ENCODE measurements at regions of chr1 and their contacts with region 1.

Region 1: DNA sequence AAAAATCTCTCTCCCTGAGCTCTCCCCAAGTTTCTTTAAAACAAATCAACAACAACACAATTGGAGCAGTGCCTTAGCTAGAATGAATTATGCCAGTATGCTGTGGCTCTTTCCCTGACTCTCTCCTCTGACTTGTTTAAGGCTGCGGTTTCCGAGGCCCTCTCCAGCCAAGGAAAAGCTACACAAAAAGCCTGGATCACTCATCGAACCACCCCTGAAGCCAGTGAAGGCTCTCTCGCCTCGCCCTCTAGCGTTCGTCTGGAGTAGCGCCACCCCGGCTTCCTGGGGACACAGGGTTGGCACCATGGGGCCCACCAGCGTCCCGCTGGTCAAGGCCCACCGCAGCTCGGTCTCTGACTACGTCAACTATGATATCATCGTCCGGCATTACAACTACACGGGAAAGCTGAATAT is 1.9 kb downstream of the S1PR1 start:
- DNase-seq: peak; percentile 93
- H3K4me3 Mint-ChIP-seq: peak overlapping the region; percentile 52
- H3K27ac Mint-ChIP-seq: no peak overlapping the region
- H3K4me1 Mint-ChIP-seq: peaks cover 32% of the 10 kb centered on the region
- H3K27me3 Mint-ChIP-seq: no peaks in the 10 kb centered on the region
- CTCF ChIP-seq: peak; percentile 89

Region 2: GRCh38 chr1:100921109-100921706 is 317.5 kb before region 1 on chr1:
- CTCF ChIA-PET with region 1: interaction called, 57 read pairs
- POLR2A ChIA-PET with region 1: interaction called, 6 read pairs
- intact Hi-C with region 1: loop called (anchors 1 kb)
- DNase-seq: peak; percentile 66
- H3K4me3 Mint-ChIP-seq: no peak overlapping the region
- H3K27ac Mint-ChIP-seq: no peak overlapping the region
- H3K4me1 Mint-ChIP-seq: no peaks in the 10 kb centered on the region
- H3K27me3 Mint-ChIP-seq: no peaks in the 10 kb centered on the region
- CTCF ChIP-seq: peak; percentile 53

Region 3: GRCh38 chr1:100989306-100990077 is 249.2 kb before region 1 on chr1:
- CTCF ChIA-PET with region 1: interaction called, 5 read pairs
- POLR2A ChIA-PET with region 1: no interaction called
- intact Hi-C with region 1: loop called (anchors 5 kb)
- DNase-seq: peak; percentile 45
- H3K4me3 Mint-ChIP-seq: no peak overlapping the region
- H3K27ac Mint-ChIP-seq: peak overlapping the region; percentile 51
- H3K4me1 Mint-ChIP-seq: peaks cover 10% of the 10 kb centered on the region
- H3K27me3 Mint-ChIP-seq: no peaks in the 10 kb centered on the region
- CTCF ChIP-seq: no peak

Region 4: DNA sequence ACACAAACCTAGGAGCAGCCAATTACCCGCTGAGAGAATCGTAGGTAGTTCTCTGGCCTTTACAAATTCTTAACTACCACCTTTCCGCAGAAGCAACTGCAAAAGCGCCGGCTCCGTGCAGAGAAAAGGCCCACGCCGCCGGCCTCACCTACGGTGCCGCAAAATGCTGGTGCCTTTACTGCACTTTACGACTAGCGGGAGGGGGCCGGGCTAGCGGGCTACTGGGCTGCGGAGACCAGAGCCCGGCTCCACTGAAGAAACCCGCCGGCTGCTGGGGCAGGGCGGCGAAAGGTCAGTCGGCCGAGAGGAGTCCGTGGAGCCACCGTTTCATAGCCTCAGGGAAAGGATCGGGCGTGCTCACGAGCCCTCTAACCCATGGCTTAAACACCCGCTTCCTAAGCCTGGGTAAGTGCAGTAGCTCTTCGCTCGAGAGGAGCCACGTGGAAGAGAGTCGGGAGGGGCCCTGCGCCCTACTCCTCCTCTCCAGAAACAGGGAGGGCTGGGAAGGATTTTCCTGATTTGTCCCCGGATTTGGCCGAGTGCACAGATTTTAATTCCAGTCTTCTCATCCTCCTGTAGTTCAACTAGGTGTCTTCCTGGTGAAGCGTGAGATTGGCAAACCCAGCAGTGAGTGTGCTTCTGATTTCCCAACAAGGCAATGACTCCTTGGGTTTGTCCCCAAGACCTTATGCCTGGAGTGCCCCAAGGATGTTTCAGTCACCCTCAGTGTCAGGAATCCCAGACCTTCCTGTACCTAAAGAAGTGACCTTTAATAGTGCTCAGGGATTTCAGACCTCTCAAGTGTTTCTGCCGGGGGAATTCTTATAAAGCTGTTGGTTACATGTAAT is 212.8 kb before region 1 on chr1 and contains the start of gene DPH5:
- CTCF ChIA-PET with region 1: interaction called, 21 read pairs
- POLR2A ChIA-PET with region 1: interaction called, 34 read pairs
- intact Hi-C with region 1: loop called (anchors 1 kb)
- DNase-seq: peak; percentile 90
- H3K4me3 Mint-ChIP-seq: peak within 1 kb of the TSS; percentile 78
- H3K27ac Mint-ChIP-seq: peak within 1 kb of the TSS; percentile 79
- H3K4me1 Mint-ChIP-seq: peaks cover 14% of the 10 kb centered on the region
- H3K27me3 Mint-ChIP-seq: no peaks in the 10 kb centered on the region
- CTCF ChIP-seq: no peak
- total RNA-seq, gene DPH5: 63.5 and 76.8 TPM in 2 replicates

Region 5: GRCh38 chr1:101253976-101254674 is 15.4 kb after region 1 on chr1:
- CTCF ChIA-PET with region 1: interaction called, 54 read pairs
- POLR2A ChIA-PET with region 1: no interaction called
- intact Hi-C with region 1: no loop called
- DNase-seq: peak; percentile 13
- H3K4me3 Mint-ChIP-seq: no peak overlapping the region
- H3K27ac Mint-ChIP-seq: no peak overlapping the region
- H3K4me1 Mint-ChIP-seq: peaks cover 17% of the 10 kb centered on the region
- H3K27me3 Mint-ChIP-seq: no peaks in the 10 kb centered on the region
- CTCF ChIP-seq: no peak

Region 6: DNA sequence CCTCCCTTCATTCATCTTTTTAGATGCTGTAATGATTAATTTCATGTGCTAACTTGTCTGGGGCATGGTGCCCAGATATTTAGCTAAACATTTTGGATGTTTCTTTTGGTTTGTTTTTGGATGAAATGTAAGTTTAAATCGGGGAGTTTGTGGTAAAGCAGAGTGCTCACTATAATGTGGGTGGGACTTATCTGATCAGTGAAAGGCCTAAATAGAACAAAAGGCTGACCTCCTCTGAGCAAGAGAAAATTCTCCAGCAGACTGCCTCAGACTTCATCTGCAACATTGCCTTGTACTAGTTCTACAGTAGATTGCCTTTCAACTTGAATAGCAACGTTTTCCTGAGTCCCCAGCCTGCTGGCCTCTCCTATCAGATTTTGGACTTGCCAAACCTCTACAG is 181.7 kb after region 1 on chr1:
- CTCF ChIA-PET with region 1: no interaction called
- POLR2A ChIA-PET with region 1: no interaction called
- intact Hi-C with region 1: no loop called
- DNase-seq: peak; percentile 9
- H3K4me3 Mint-ChIP-seq: no peak overlapping the region
- H3K27ac Mint-ChIP-seq: no peak overlapping the region
- H3K4me1 Mint-ChIP-seq: no peaks in the 10 kb centered on the region
- H3K27me3 Mint-ChIP-seq: peaks cover 3% of the 10 kb centered on the region
- CTCF ChIP-seq: no peak

Measured in MCF 10A (cell line).